ENCODE measurements at regions of chr20 and their contacts with region 1.

Region 1: GRCh38 chr20:266596-267562 is 9.4 kb downstream of the DEFB132 start:
- DNase-seq: peak; percentile 89
- ATAC-seq: peak; percentile 79
- H3K4me3 ChIP-seq: peak overlapping the region; percentile 57
- H3K27ac ChIP-seq: no peak overlapping the region
- H3K4me1 ChIP-seq: peaks cover 4% of the 10 kb centered on the region
- H3K27me3 ChIP-seq: no peaks in the 10 kb centered on the region
- CTCF ChIP-seq: peak; percentile 96

Region 2: DNA sequence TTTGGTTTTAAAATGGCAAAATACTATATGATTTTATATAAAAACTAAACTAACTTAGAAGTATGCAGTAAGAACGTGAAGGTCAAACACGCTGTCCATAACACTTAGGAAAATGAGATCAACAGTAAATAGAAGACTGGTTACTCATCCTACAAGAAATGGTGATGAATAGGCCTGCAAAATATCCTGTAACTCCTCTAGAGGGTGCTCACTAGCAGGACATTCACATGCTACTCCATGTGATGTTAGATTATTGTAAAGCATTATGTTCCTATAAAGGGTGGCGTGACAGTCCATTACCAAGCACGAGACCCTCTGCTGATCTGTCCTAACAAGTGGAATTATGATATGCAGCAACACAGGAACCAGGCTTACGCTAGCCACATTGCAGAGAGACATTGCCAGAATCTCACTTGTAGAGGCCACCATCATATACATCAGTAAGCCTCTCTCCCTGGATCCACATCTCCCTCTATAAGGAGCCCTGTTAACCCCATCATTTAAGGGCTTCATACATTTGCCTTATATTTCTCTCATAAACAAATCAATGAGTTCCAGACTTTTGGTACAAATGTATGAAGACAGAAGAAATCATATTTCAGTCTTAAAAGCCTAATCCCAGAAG is 57.8 kb before region 1 on chr20:
- CTCF ChIA-PET with region 1: no interaction called
- POLR2A ChIA-PET with region 1: no interaction called
- intact Hi-C with region 1: loop called (anchors 2 kb)
- DNase-seq: peak; percentile 78
- ATAC-seq: peak; percentile 97
- H3K4me3 ChIP-seq: no peak overlapping the region
- H3K27ac ChIP-seq: no peak overlapping the region
- H3K4me1 ChIP-seq: no peaks in the 10 kb centered on the region
- H3K27me3 ChIP-seq: peaks cover 63% of the 10 kb centered on the region
- CTCF ChIP-seq: peak; percentile 81

Region 3: DNA sequence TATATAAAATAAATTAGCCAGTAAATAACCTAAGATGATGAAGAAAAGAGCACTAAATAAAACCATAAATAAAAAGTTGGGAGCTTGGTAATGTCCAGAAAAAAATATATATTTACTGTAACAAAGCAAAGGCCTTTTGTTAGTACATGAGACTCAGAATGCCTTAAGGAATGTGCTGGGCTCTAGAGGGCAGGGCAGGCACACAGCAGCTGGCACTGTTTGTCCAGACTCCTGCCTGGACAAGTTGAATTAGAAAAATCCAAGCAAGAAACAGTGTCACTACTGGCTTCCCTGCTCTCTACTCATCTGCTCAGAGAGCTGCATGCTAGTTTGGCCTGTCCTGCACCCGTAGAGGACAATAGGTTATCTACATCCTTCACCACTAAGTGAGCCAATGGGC is 31.0 kb before region 1 on chr20:
- CTCF ChIA-PET with region 1: no interaction called
- POLR2A ChIA-PET with region 1: no interaction called
- intact Hi-C with region 1: loop called (anchors 2 kb)
- DNase-seq: peak; percentile 51
- ATAC-seq: peak; percentile 80
- H3K4me3 ChIP-seq: no peak overlapping the region
- H3K27ac ChIP-seq: no peak overlapping the region
- H3K4me1 ChIP-seq: no peaks in the 10 kb centered on the region
- H3K27me3 ChIP-seq: peaks cover 17% of the 10 kb centered on the region
- CTCF ChIP-seq: peak; percentile 47; the same call in 1 of the 2 replicates

Region 4: DNA sequence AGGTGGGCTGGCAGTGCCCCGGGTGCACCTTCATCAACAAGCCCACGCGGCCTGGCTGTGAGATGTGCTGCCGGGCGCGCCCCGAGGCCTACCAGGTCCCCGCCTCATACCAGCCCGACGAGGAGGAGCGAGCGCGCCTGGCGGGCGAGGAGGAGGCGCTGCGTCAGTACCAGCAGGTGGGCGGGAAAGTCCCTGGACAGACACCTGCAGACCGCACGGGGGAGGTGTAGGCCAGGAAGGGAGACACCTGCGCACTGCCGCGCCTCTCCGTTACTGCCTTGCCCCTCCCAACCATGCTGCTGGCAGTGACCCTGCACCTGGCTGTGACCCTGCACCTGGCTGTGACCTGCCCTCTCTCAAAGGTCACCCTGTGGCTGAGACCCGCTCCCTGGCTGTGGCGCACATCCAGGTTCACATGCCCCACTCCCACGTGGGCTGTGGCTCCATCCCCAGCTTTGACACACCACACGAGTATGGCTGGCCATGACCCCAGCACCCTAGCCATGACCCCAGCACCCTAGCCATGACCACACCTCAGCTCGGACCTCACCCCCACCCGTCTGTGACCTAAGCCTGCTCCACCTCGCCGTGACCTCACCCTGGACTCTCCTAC is 152.8 kb after region 1 on chr20:
- CTCF ChIA-PET with region 1: no interaction called
- POLR2A ChIA-PET with region 1: no interaction called
- intact Hi-C with region 1: no loop called
- DNase-seq: no peak
- ATAC-seq: no peak
- H3K4me3 ChIP-seq: no peak overlapping the region
- H3K27ac ChIP-seq: no peak overlapping the region
- H3K4me1 ChIP-seq: no peaks in the 10 kb centered on the region
- H3K27me3 ChIP-seq: no peaks in the 10 kb centered on the region
- CTCF ChIP-seq: no peak

Measured in PC-3 (cell line).